CD4-positive, alpha-beta memory T cell (primary cell): ENCODE measurements at regions of chr20 and their contacts with region 1.

Region 1: GRCh38 chr20:25390538-25391528 is at the start of gene ABHD12:
- DNase-seq: peak; percentile 91 to 95 (median 92)
- H3K4me3 ChIP-seq: peak within 1 kb of the TSS; percentile 57 to 83
- H3K4me3 Mint-ChIP-seq: peak within 1 kb of the TSS; percentile 86 to 91 (median 89)
- H3K27ac ChIP-seq: peak within 1 kb of the TSS; percentile 61
- H3K27ac Mint-ChIP-seq: peak within 1 kb of the TSS; percentile 73 to 94 (median 88)
- H3K4me1 ChIP-seq: peaks cover 15% of the 10 kb centered on the region
- H3K4me1 Mint-ChIP-seq: peaks cover 12 to 25% (median 14%) of the 10 kb centered on the region in 4 donors
- H3K27me3 ChIP-seq: no peaks in the 10 kb centered on the region
- H3K27me3 Mint-ChIP-seq: no peaks in the 10 kb centered on the region
- total RNA-seq, gene ABHD12: 30.1 to 30.9 TPM

Region 2: GRCh38 chr20:25057234-25058050 is 333.4 kb before region 1 on chr20:
- CTCF ChIA-PET with region 1: no interaction called
- POLR2A ChIA-PET with region 1: no interaction called
- intact Hi-C with region 1: loop called (anchors 1 kb)
- DNase-seq: peak; percentile 84 to 93 (median 87)
- H3K4me3 ChIP-seq: peak overlapping the region; percentile 17 to 84
- H3K4me3 Mint-ChIP-seq: peak overlapping the region; percentile 87 to 93 (median 90)
- H3K27ac ChIP-seq: peak overlapping the region; percentile 82
- H3K27ac Mint-ChIP-seq: peak overlapping the region; percentile 88 to 96 (median 94)
- H3K4me1 ChIP-seq: peaks cover 58% of the 10 kb centered on the region
- H3K4me1 Mint-ChIP-seq: peaks cover 35 to 68% (median 47%) of the 10 kb centered on the region in 4 donors
- H3K27me3 ChIP-seq: no peaks in the 10 kb centered on the region
- H3K27me3 Mint-ChIP-seq: peaks cover 0 to under 1% of the 10 kb centered on the region in 2 donors

Region 3: DNA sequence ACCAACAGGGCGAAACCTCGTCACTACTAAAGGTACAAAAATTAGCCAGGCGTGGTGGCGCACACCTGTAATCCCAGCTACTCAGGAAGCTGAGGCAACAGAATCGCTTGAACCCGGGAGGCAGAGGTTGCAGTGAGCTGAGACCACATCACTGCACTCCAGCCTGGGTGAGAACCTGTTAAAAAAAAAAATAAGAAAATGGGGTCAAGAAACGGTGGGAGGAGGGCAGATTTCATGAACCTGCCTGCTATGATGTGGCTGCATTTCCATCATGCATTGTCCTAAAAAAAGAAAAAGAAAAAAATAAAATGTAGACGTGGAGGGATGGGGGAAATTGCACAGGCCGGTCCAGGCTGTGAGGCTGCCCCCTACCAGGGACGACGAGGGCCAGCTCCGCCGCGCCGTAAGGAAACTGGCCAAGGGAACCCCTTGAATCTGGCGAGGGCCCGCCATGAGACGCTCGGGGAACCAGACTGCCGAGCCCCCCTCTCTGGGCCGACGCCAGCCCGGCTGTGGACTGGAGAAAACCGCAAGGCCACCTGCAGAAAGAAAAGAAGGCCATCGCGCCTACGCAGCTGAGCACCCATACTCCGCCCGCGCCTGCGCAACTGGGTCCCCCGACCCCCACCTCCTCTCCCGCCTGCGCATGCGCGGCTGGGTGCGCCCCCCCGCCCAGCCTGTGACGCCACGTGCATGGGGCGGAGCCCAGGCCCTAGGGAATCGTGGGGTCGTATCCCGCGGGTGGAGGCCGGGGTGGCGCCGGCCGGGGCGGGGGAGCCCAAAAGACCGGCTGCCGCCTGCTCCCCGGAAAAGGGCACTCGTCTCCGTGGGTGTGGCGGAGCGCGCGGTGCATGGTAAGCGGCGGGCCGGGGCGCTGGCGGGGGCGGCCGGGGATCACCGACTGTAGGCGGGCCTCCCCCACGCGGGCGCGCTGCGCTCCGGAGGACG is 195.5 kb before region 1 on chr20 and contains the start of gene ENTPD6:
- CTCF ChIA-PET with region 1: no interaction called
- POLR2A ChIA-PET with region 1: interaction called, 6 read pairs
- intact Hi-C with region 1: loop called (anchors 1 kb)
- DNase-seq: peak; percentile 89 to 98 (median 93)
- H3K4me3 ChIP-seq: peak within 1 kb of the TSS; percentile 82 to 85
- H3K4me3 Mint-ChIP-seq: peak within 1 kb of the TSS; percentile 85 to 95 (median 90)
- H3K27ac ChIP-seq: peak within 1 kb of the TSS; percentile 77
- H3K27ac Mint-ChIP-seq: peak within 1 kb of the TSS; percentile 84 to 95 (median 93)
- H3K4me1 ChIP-seq: peaks cover 28% of the 10 kb centered on the region
- H3K4me1 Mint-ChIP-seq: peaks cover 33 to 46% (median 38%) of the 10 kb centered on the region in 4 donors
- H3K27me3 ChIP-seq: no peaks in the 10 kb centered on the region
- H3K27me3 Mint-ChIP-seq: no peaks in the 10 kb centered on the region
- total RNA-seq, gene ENTPD6: 90.2 to 94.3 TPM

Region 4: GRCh38 chr20:25270829-25271251 is 120.0 kb before region 1 on chr20:
- CTCF ChIA-PET with region 1: no interaction called
- POLR2A ChIA-PET with region 1: no interaction called
- intact Hi-C with region 1: no loop called
- DNase-seq: no peak
- H3K4me3 ChIP-seq: no peak overlapping the region
- H3K4me3 Mint-ChIP-seq: no peak overlapping the region
- H3K27ac ChIP-seq: no peak overlapping the region
- H3K27ac Mint-ChIP-seq: no peak overlapping the region
- H3K4me1 ChIP-seq: no peaks in the 10 kb centered on the region
- H3K4me1 Mint-ChIP-seq: peaks cover 0 to 6% (median 4%) of the 10 kb centered on the region in 4 donors
- H3K27me3 ChIP-seq: no peaks in the 10 kb centered on the region
- H3K27me3 Mint-ChIP-seq: no peaks in the 10 kb centered on the region

Region 5: DNA sequence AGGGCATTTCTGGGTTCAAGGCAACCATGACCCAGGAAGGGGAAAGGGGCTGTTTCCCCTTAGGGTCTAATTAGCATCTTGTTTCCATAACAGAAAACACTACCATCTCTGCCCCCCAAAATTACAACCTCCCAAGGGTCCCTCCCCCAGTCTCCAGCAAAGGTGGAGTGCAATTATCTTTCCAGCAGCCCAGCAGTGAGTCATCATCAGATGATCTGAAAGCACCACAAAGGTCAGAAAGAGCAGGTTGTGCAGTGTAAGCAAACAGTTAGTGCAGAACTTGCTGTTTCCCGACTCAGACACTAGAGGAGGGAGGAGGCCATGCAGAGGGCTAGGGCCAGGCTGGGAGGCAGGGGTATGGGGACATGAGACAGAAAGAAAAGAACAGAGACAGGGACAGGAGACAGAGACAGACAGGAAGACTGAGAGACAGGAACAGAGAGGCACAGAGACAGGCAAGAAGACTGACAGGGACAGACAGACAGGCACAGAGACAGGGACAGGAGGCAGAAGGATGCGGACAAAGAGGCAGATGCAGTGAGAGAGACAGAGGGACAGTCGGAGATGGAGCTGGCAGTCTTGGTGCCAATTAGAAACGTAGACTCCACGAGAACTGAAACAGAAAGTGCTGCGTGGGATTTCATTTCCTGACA is 80.4 kb before region 1 on chr20:
- CTCF ChIA-PET with region 1: no interaction called
- POLR2A ChIA-PET with region 1: no interaction called
- intact Hi-C with region 1: loop called (anchors 2 kb)
- DNase-seq: peak; percentile 23 to 49 (median 31)
- H3K4me3 ChIP-seq: peak overlapping the region; percentile 13 to 46
- H3K4me3 Mint-ChIP-seq: peak overlapping the region; percentile 66 to 96 (median 83)
- H3K27ac ChIP-seq: peak overlapping the region; percentile 55
- H3K27ac Mint-ChIP-seq: peak overlapping the region; percentile 53 to 98 (median 93)
- H3K4me1 ChIP-seq: peaks cover 20% of the 10 kb centered on the region
- H3K4me1 Mint-ChIP-seq: peaks cover 13 to 41% (median 18%) of the 10 kb centered on the region in 4 donors
- H3K27me3 ChIP-seq: no peaks in the 10 kb centered on the region
- H3K27me3 Mint-ChIP-seq: no peaks in the 10 kb centered on the region

Region 6: GRCh38 chr20:25372584-25373336 is 18.1 kb before region 1 on chr20:
- CTCF ChIA-PET with region 1: no interaction called
- POLR2A ChIA-PET with region 1: no interaction called
- intact Hi-C with region 1: no loop called
- DNase-seq: no peak
- H3K4me3 ChIP-seq: no peak overlapping the region
- H3K4me3 Mint-ChIP-seq: no peak overlapping the region
- H3K27ac ChIP-seq: no peak overlapping the region
- H3K27ac Mint-ChIP-seq: no peak overlapping the region
- H3K4me1 ChIP-seq: no peaks in the 10 kb centered on the region
- H3K4me1 Mint-ChIP-seq: peaks cover 0 to 9% (median 8%) of the 10 kb centered on the region in 4 donors
- H3K27me3 ChIP-seq: no peaks in the 10 kb centered on the region
- H3K27me3 Mint-ChIP-seq: no peaks in the 10 kb centered on the region

Region 7: DNA sequence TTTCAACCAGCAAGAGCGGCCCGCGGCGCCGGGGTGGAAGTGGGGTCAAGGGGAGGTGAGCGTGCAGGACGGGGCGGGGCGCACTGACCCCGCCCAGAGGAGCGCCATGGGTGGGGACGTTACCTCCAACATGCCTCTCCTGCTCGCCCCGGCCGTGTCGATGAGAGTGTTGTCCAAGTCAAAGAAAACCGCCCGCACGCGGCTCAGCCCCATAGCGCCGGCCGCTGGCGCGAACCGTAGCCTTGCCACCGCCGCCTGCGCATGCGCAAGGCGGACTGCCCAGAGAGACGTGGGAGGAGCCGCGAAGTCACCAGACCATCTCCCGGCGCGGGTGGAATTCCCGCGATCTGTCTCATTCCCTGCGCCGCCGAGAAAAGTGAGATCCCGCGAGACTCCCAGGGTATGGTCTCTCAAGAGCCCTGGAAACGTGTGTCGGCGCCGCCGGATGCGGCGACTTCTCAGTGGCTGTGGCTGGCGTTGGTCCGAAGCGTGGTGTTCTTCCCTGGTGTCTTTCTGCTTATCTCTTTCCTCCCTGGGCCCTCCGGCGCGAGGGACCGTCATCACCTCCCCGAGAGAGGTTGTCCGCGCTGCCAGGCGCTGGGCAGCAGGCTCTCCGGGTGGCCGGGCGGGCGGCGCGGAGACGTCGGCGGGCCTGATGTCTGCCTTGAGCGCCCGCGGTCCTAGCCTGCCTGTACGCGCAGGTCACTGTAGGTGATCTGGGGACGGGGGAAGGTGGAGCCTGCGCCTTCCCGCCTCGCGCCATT is 233.1 kb after region 1 on chr20 and contains the start of gene NANP:
- CTCF ChIA-PET with region 1: no interaction called
- POLR2A ChIA-PET with region 1: no interaction called
- intact Hi-C with region 1: loop called (anchors 2 kb)
- DNase-seq: peak; percentile 79 to 84 (median 83)
- H3K4me3 ChIP-seq: peak within 1 kb of the TSS; percentile 56 to 73
- H3K4me3 Mint-ChIP-seq: peak within 1 kb of the TSS; percentile 92 to 97 (median 96)
- H3K27ac ChIP-seq: peak within 1 kb of the TSS; percentile 50
- H3K27ac Mint-ChIP-seq: peak within 1 kb of the TSS; percentile 78 to 97 (median 95)
- H3K4me1 ChIP-seq: peaks cover 16% of the 10 kb centered on the region
- H3K4me1 Mint-ChIP-seq: peaks cover 14 to 25% (median 17%) of the 10 kb centered on the region in 4 donors
- H3K27me3 ChIP-seq: no peaks in the 10 kb centered on the region
- H3K27me3 Mint-ChIP-seq: no peaks in the 10 kb centered on the region
- total RNA-seq, gene NANP: 1.9 to 2.0 TPM

Region 8: DNA sequence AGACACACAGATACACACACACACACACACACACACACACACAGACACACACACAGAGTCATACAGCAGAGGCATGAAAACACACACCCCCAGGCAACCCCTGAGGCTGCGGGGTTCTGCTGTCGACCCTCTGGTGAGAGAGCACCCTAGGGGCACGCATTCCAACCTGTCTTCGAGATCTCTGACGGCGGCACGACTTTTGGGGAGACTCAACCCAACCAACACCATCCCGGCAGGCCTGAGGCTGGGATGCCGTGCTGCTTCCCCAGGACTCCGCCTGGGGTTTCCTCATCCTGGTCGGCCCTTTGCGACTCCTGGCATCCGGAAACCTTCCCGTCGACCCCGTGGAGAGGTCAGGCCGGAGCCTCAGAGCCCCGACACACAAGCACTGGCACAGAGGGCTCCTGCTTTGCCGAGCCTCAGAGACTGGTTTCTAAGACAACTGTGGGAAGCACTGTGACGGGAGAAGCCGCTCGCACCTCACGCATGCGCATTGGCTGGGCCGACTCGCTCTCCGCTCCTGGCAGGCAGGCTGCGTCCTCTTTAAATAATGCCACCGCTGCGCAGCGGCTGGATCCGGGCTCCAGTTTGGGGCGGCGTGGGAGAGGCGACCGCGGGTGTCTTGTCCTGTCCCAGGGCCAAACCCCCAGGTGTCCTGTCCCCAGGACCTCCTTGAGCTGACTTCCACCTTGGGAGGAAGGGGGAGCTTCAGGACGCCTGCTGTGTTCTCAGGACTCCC is 474.7 kb after region 1 on chr20:
- CTCF ChIA-PET with region 1: no interaction called
- POLR2A ChIA-PET with region 1: no interaction called
- intact Hi-C with region 1: loop called (anchors 5 kb)
- DNase-seq: peak; percentile 67 to 79 (median 75)
- H3K4me3 ChIP-seq: peak overlapping the region in 1 of 2 donors; percentile 24
- H3K4me3 Mint-ChIP-seq: peak overlapping the region; percentile 25 to 86 (median 64)
- H3K27ac ChIP-seq: no peak overlapping the region
- H3K27ac Mint-ChIP-seq: peak overlapping the region in 3 of 7 donors; percentile 46 to 71 (median 52)
- H3K4me1 ChIP-seq: peaks cover 39% of the 10 kb centered on the region
- H3K4me1 Mint-ChIP-seq: peaks cover 21 to 62% (median 43%) of the 10 kb centered on the region in 4 donors
- H3K27me3 ChIP-seq: peaks cover 5% of the 10 kb centered on the region
- H3K27me3 Mint-ChIP-seq: peaks cover 40 to 49% of the 10 kb centered on the region in 2 donors